ENCODE measurements at regions of chr10 and their contacts with region 1.

Region 1: DNA sequence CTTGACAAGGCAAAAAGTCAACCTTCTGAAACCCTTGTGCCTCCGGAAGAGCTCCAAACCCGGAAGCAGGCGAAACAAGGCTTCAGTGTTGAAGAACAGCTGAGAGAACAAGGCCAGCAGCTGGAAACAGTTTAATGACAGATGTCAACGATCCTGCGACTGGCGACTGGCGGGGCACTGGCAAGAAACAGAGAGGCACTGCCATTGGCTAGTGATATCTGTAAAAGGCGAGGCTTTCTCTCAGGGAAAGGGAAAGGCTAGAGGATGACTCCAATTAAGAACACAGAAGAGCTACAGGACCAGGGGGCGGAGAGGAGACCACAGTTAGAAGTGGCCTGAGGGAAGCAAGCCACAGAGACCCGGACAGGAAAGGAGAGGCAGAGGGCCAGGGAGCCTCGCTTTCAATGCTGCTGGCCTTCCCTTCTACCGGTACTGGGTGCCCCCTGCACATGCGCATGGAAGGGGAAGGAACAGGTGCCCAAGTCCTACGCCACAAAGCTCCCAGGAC is 19.4 kb downstream of the ITGB1 start:
- DNase-seq: peak; percentile 56
- ATAC-seq: peak; percentile 53

Region 2: GRCh38 chr10:32901815-32902214 is 36.8 kb before region 1 on chr10:
- intact Hi-C with region 1: loop called (anchors 5 kb)
- DNase-seq: no peak
- ATAC-seq: no peak

Region 3: DNA sequence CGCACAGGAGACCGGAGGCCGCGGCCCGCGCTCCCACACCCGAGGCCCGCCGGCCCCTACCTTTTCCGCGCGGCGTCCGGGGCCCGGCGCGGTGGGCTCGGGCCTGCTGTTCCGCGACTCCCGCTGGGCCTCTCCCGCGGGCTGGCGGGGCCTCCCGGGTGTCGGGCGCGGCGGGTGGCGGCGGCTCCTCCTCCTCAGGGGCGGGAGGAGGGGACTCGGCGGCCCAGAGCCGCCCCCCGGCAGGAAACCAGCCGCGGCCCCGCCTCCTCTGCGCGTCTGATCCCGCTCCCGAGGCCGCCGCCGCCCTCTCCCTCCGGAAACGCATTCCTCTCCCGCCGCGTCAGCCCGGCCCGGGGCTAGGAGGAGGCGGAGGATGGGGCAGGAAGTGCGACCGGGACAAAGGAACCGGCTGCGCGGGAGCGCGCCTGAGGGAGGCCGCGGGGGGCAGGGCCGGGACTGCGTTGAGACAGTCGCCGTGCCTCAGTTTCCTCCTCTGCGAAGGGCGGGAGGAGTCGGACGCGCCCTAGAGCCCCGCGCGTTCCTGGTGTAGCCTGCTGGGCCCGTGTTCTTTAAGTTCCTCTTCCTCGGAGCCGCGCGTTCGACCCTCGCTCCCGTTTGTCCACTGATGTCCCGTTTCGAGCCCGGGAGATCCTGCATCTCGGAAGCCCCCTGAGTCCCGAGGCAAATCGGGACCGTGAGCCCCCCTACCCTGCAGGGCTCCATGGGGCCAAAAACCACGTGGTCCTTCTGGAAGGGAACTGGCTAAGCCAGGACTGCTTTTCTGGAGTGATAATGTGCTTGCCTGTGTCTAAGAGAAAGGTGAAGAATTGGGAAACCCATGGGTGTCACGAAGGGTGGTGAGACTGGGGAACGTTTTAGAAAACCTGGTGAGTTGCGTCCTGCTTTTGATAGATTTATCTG is 19.7 kb after region 1 on chr10 and contains the start of gene ITGB1:
- intact Hi-C with region 1: loop called (anchors 2 kb)
- DNase-seq: peak; percentile 98
- ATAC-seq: peak; percentile 97
- total RNA-seq, gene ITGB1: 583 TPM

Region 4: DNA sequence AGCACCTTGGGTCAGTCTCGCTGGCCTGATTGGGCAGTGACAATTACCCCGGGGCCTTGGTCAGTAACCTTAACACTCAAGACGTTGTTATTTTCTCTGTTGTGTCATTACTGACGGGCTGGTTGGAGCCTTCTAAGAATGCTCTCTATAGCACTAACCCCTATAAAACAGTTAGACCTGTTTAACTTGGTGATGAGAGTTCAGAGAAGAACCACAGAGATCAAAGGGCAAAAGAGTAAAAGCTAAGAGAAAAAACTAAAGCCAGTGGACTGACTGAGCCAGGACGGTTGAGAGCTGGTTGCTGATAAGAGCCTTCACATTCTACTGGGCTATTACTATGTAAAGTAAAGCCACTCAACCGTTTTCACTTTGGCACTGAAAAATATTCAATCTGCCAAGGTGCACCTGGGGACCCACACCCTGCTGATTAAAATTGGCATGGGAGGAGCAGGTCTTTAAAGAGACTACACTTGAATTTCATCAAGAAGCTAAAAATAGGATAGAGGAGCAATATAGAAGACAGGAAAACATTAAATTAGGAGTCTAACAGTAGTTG is 33.0 kb after region 1 on chr10:
- intact Hi-C with region 1: no loop called
- DNase-seq: no peak
- ATAC-seq: peak; percentile 64

Region 5: GRCh38 chr10:33010132-33011037 is 71.8 kb after region 1 on chr10:
- intact Hi-C with region 1: no loop called
- DNase-seq: no peak
- ATAC-seq: no peak

Region 6: DNA sequence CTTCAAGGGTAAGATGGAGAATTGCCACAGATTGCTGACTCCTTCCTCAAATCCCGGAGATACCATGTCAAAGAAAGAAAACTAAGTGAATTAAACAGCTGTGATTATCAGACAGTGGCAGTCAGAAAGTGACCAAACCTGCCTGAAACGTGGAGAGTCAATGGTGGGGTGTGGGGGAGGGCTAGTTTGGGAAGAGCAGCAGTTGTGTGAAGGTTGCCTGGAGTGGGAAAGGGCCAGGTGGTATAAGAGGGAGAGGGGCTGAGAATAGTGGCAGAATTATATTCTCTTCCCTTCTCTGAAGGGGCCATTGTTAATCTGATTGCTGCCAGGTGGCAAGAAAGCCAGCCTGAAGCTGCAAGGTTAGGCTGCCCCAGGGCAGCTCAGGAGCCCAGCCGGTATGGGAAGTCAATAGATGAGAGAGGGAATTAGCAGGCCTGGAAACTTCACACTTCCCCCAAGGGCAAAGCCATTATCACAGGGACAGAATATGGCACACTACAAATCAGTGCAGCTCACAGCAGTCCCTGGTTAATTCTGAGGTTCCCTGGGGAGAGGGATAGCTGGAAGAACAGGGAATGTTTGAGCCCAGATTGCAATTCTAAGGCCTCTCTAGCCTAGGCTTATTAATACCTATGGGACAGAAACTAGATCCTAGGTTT is 103.3 kb after region 1 on chr10:
- intact Hi-C with region 1: no loop called
- DNase-seq: no peak
- ATAC-seq: no peak